Activated CD4-positive, alpha-beta T cell treated with anti-CD3 and anti-CD28 coated beads for 36 hours (primary cell): ENCODE measurements at regions of chr22 and their contacts with region 1.

Region 1: DNA sequence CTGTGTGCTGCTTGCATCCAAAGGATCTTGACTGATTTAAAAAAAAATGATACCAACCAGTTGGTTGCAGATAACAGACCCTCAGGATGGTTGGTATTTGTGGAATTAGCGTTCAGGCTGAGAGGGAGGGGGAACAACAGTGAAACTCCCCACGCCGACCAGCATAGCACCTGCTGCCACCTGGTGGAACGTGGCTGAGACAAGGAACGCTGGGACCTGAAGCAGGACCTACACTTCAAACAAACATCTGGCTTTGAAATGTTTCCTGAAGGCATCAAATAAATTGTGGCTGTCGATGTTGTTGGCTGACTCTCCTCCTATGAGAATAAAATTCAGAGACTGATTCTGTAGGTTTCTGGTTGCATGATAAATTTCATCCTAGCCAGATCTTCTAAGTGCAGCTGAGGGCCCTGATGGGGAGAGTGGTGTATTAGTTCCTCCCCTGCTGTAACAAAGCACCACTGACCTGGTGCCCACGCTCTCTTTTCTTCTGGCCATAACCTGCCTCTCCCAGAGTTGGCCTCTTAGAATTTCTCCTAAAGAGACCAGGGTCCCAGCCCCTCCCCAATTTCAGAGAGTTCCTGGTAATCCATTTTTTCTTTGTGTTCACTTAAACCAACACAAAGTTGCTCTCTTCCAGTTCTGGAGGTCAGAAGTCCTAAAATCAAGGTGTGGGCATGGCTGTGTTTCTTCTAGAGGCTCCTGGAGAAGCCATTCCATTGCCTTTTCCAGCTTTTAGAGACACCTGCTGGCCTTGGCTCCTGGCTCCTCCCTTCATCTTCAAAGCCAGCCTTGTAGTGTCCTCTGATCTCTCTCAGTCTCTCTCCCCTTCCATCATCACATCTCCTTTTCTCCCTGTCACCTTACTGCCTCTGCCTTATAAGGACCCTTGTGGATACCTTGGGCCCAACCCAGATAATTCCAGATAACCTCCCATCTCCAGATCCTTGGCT is 17.3 kb downstream of the APOL2 start:
- DNase-seq: peak; percentile 75
- ATAC-seq: peak; percentile 74
- H3K4me3 Mint-ChIP-seq: no peak overlapping the region
- H3K27ac Mint-ChIP-seq: no peak overlapping the region
- H3K4me1 Mint-ChIP-seq: peaks cover 5% of the 10 kb centered on the region
- H3K27me3 Mint-ChIP-seq: peaks cover 1% of the 10 kb centered on the region

Region 2: DNA sequence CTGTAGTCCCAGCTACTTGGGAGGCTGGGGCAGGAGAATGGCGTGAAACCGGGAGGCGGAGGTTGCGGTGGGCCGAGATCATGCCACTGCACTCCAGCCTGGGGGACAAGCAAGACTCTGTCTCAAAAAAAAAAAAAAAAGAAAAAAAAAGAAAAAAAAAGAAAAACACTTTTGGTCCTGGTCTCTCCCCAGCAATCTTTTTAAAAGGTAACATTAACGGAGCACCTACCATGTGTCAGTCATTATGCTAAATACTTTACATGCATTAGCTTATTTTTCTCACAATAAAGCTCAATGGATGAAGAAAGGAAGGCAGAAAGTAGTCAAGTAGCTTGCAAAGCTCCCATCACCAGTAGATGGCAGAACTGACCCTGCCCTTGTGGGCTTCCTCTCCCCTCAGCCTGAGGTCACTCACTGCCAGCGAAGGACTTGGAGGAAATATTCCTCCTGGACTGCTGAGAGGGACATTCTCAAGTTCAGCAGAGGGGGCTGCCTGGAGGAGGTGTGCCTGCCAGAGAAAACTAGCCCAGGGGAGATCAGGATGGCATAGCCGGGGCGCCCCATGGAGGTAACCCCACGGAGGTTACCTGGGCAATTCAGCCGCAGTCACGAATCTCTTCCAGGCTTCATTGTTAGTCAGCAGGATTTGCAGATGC is 77.1 kb before region 1 on chr22:
- CTCF ChIA-PET with region 1: no interaction called
- POLR2A ChIA-PET with region 1: no interaction called
- intact Hi-C with region 1: loop called in 1 of 2 experiments (anchors 2 kb)
- DNase-seq: peak; percentile 57
- ATAC-seq: peak; percentile 76
- H3K4me3 Mint-ChIP-seq: no peak overlapping the region
- H3K27ac Mint-ChIP-seq: no peak overlapping the region
- H3K4me1 Mint-ChIP-seq: peaks cover 13% of the 10 kb centered on the region
- H3K27me3 Mint-ChIP-seq: no peaks in the 10 kb centered on the region